MCF 10A (cell line): ENCODE measurements at regions of chr15 and their contacts with region 1.

Region 1: DNA sequence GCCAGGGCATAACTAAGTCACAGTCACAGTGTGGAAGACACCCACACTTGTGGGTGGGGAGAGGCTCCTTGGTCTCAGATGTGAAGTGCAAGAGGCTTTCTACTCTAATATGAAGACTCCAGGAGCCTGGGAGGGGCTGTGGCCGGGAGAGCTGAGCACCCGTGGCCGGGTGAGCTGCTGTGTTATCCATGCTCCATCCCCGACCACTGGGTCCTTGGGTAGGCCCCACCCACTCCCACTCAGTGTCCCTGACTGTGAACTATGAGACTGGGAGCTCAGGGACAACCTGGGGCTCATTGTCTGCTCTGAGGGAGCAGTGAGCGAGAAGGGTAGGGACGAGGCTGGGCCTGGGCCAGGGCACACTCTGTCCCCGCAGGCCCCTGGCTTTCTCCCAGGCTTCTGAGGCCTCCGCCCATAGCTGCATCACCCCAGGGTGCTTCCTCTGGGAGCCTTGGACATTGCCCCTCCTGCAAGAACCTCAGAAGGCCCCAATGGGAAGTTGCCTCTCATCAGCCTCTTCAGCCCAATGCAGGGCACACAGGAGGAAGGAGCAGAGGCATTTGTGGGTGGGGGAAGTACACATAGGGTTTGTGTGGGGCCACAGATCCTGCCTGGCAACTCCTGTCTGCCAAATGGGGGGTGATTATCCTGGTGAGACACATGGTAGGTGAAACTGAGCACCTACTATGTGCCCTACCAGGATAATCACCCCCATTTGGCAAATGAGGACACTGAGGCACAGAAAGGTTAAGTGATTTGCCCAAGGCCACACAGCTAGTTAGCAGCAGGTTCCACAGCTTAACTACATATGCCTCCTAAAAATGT is 2.4 kb downstream of the ANPEP start:
- DNase-seq: peak; percentile 97
- H3K4me3 Mint-ChIP-seq: peak overlapping the region; percentile 89
- H3K27ac Mint-ChIP-seq: peak overlapping the region; percentile 88
- H3K4me1 Mint-ChIP-seq: peaks cover 33% of the 10 kb centered on the region
- H3K27me3 Mint-ChIP-seq: no peaks in the 10 kb centered on the region
- CTCF ChIP-seq: no peak

Region 2: DNA sequence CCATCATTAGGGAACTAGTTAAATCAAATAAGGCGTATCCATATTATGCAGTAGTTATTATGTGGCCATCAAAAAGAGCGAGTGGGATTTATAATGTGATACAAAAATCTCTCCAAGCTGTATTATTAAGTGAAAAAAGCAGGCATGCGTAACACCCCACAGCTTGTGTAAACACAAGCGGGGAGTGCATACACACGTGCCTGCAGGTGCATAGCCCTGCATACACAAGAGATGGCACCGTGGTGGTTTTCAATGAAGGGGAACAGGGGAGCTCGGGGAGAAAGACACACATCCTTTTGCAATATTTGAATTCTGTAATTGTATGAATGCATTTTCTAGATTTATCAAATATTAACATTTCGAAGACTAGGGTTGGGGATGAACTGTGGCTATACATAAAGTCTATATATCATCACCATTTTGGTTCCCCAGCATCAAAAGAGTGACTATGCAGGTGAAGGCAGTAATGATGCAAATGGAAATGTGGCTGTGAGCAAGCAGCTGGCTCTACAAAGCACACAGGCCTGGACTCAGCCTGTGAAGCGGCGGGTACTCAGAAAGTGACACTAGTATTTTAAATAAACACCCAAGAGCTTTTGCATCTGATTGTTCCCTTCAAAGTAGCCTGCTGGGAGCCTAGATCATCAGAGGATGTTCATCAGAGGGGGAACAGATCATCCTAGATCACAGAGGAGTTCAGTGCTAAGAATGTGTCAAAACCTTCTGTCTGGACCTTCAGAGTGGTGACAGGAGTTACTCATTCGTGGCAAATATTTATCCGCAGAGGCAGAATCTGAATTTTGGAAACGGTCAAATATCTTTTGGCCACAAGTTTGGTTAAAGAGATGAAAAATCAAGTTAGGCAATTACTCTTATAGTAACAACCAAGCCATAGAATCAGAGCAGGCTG is 147.5 kb before region 1 on chr15:
- CTCF ChIA-PET with region 1: no interaction called
- POLR2A ChIA-PET with region 1: no interaction called
- intact Hi-C with region 1: no loop called
- DNase-seq: no peak
- H3K4me3 Mint-ChIP-seq: no peak overlapping the region
- H3K27ac Mint-ChIP-seq: no peak overlapping the region
- H3K4me1 Mint-ChIP-seq: peaks cover 12% of the 10 kb centered on the region
- H3K27me3 Mint-ChIP-seq: no peaks in the 10 kb centered on the region
- CTCF ChIP-seq: no peak

Region 3: DNA sequence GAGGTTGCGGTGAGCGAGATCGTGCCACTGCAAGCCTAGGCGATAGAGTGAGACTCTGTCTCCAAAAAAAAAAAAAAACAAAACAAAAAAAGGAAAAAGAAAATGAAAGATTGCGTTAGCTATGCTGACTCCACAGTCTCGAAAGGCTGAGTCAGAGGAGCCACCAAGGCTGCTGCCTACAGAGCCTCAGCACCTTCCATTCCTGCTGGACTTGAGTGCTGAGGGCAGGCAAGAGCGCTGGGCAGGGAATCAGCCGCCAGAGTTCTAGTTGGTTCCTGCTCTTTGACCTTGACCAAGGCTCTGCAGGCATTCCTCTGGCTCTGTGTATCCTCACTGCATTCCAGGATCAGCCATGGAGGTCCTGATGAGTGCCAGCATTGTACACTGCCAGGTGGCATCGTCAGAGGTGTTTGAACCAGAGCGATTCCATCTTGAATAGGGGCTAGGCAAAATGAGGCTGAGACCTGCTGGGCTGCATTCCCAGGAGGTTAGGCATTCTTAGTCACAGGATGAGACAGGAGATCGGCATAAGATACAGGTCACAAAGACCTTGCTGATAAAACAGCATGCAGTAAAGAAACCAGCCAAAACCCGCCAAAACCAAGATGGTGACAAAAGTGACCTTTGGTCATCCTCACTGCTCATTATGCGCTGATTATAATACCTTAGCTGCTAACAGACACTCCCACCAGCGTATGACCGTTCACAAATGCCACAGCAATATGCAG is 30.2 kb before region 1 on chr15:
- CTCF ChIA-PET with region 1: interaction called, 3 read pairs
- POLR2A ChIA-PET with region 1: interaction called, 22 read pairs
- intact Hi-C with region 1: loop called (anchors 2 kb)
- DNase-seq: peak; percentile 84
- H3K4me3 Mint-ChIP-seq: peak overlapping the region; percentile 48
- H3K27ac Mint-ChIP-seq: peak overlapping the region; percentile 55
- H3K4me1 Mint-ChIP-seq: peaks cover 24% of the 10 kb centered on the region
- H3K27me3 Mint-ChIP-seq: no peaks in the 10 kb centered on the region
- CTCF ChIP-seq: no peak

Region 4: DNA sequence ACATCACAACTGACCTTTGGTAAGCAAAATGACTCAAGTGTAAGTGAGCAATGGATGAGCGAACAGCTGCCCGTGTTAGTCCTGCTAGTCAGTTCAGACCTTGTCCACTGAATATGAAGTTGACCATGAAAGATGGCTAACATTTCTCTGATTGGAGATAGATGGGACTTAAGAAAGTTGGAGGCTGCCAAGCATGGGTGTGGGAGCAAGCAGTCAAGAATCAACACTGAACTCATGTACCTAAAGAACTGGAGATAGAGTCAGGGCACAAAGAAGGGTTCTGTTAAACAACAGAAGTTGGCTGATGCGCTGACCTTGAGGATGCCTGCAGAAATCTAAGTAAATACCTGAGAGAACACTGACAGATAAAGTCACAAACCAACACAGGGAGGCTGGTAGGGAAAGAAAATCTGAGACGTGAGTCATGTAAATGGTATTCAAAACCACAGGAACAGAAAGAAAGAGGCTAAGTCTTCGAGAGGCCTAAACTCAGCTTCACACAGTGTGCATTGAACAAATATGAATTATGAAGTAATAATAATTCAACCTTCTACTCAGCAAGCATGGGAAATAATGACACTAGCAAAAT is 33.2 kb after region 1 on chr15:
- CTCF ChIA-PET with region 1: interaction called, 5 read pairs
- POLR2A ChIA-PET with region 1: interaction called, 20 read pairs
- intact Hi-C with region 1: loop called (anchors 1 kb)
- DNase-seq: peak; percentile 88
- H3K4me3 Mint-ChIP-seq: no peak overlapping the region
- H3K27ac Mint-ChIP-seq: peak overlapping the region; percentile 80
- H3K4me1 Mint-ChIP-seq: peaks cover 48% of the 10 kb centered on the region
- H3K27me3 Mint-ChIP-seq: no peaks in the 10 kb centered on the region
- CTCF ChIP-seq: no peak

Region 5: GRCh38 chr15:89904519-89904918 is 92.3 kb after region 1 on chr15:
- CTCF ChIA-PET with region 1: no interaction called
- POLR2A ChIA-PET with region 1: no interaction called
- intact Hi-C with region 1: no loop called
- DNase-seq: no peak
- H3K4me3 Mint-ChIP-seq: no peak overlapping the region
- H3K27ac Mint-ChIP-seq: no peak overlapping the region
- H3K4me1 Mint-ChIP-seq: no peaks in the 10 kb centered on the region
- H3K27me3 Mint-ChIP-seq: no peaks in the 10 kb centered on the region
- CTCF ChIP-seq: no peak